Panc1 (cell line): ENCODE measurements at regions of chr5 and their contacts with region 1.

Region 1: GRCh38 chr5:138890644-138891043 is 15.5 kb upstream of the LRRTM2 start:
- DNase-seq: no peak
- ATAC-seq: no peak
- H3K4me3 ChIP-seq: no peak overlapping the region
- H3K27ac ChIP-seq: no peak overlapping the region
- H3K4me1 ChIP-seq: no peaks in the 10 kb centered on the region
- H3K27me3 ChIP-seq: no peaks in the 10 kb centered on the region
- CTCF ChIP-seq: no peak

Region 2: DNA sequence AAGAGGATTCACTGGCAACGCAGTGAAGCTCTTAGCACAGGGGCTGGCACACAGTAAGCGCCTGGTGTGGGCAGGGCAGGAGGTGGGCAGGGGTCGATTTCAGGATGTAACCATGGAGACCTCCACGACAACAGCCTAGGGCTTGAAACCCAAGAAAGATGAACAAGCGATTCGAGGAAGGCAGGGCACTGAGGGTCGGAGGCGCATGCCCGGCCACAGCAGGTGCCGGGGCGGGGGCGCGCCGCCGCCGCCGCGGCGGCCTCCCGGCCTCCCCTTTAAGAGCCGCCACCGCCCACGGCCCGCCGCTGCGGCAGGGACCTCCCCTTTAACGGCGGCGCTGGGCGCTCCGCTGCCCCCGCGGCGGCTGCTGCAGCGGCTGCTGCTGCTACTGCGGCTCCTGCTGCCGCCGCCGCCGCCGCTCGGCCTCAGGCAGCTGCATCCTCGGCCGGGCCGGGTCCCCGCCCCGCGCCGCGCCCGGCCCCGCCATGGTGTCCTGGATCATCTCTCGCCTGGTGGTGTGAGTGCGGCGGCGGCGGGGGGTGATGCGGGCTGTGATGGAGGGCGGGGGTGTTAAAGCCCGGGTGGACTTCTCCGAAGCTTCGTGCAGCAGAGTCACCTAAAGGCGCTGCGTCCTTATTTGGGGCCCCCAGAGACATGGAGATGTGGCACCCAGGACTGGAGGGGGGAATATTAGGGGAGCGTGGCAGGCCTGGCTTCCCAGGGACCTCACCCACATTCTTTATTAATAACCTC is 451.7 kb before region 1 on chr5 and contains the start of gene REEP2:
- CTCF ChIA-PET with region 1: no interaction called
- POLR2A ChIA-PET with region 1: no interaction called
- in situ Hi-C with region 1: no loop called
- intact Hi-C with region 1: no loop called
- DNase-seq: no peak
- ATAC-seq: peak; percentile 75
- H3K4me3 ChIP-seq: peak within 1 kb of the TSS; percentile 45 to 52
- H3K27ac ChIP-seq: no peak within 1 kb of the TSS
- H3K4me1 ChIP-seq: peaks cover 4% of the 10 kb centered on the region; the same call in 1 of the 2 replicates
- H3K27me3 ChIP-seq: no peaks in the 10 kb centered on the region
- CTCF ChIP-seq: no peak
- total RNA-seq, gene REEP2: 6.5 TPM

Region 3: GRCh38 chr5:138874771-138875551 is 15.7 kb before region 1 on chr5 and contains the start of gene LRRTM2:
- CTCF ChIA-PET with region 1: no interaction called
- POLR2A ChIA-PET with region 1: no interaction called
- in situ Hi-C with region 1: no loop called
- intact Hi-C with region 1: no loop called
- DNase-seq: no peak
- ATAC-seq: no peak
- H3K4me3 ChIP-seq: peak within 1 kb of the TSS in 1 of 2 experiments; percentile 3; a peak in 1 of 4 replicates
- H3K27ac ChIP-seq: no peak within 1 kb of the TSS
- H3K4me1 ChIP-seq: peaks cover 30% of the 10 kb centered on the region
- H3K27me3 ChIP-seq: no peaks in the 10 kb centered on the region
- CTCF ChIP-seq: no peak
- total RNA-seq, gene LRRTM2: not detected

Region 4: GRCh38 chr5:138911441-138911840 is 20.8 kb after region 1 on chr5:
- CTCF ChIA-PET with region 1: no interaction called
- POLR2A ChIA-PET with region 1: interaction called, 11 read pairs
- in situ Hi-C with region 1: no loop called
- intact Hi-C with region 1: no loop called
- DNase-seq: no peak
- ATAC-seq: no peak
- H3K4me3 ChIP-seq: no peak overlapping the region
- H3K27ac ChIP-seq: no peak overlapping the region
- H3K4me1 ChIP-seq: no peaks in the 10 kb centered on the region
- H3K27me3 ChIP-seq: no peaks in the 10 kb centered on the region
- CTCF ChIP-seq: no peak